ENCODE measurements at regions of chr6 and their contacts with region 1.

Region 1: GRCh38 chr6:38871741-38872568 is 156.8 kb downstream of the DNAH8 start:
- DNase-seq: no peak
- ATAC-seq: peak in 1 of 4 donors; percentile 58
- H3K4me3 ChIP-seq: no peak overlapping the region
- H3K27ac ChIP-seq: no peak overlapping the region
- H3K4me1 ChIP-seq: no peaks in the 10 kb centered on the region
- H3K27me3 ChIP-seq: peaks cover 0 to 4% (median 0%) of the 10 kb centered on the region in 3 donors
- CTCF ChIP-seq: peak; percentile 80

Region 2: GRCh38 chr6:38617856-38618255 is 254.1 kb before region 1 on chr6:
- intact Hi-C with region 1: no loop called
- DNase-seq: no peak
- ATAC-seq: no peak
- H3K4me3 ChIP-seq: no peak overlapping the region
- H3K27ac ChIP-seq: no peak overlapping the region
- H3K4me1 ChIP-seq: peaks cover 2% of the 10 kb centered on the region
- H3K27me3 ChIP-seq: no peaks in the 10 kb centered on the region
- CTCF ChIP-seq: no peak

Region 3: GRCh38 chr6:38824243-38824894 is 47.6 kb before region 1 on chr6:
- intact Hi-C with region 1: no loop called
- DNase-seq: no peak
- ATAC-seq: no peak
- H3K4me3 ChIP-seq: no peak overlapping the region
- H3K27ac ChIP-seq: no peak overlapping the region
- H3K4me1 ChIP-seq: peaks cover 11% of the 10 kb centered on the region
- H3K27me3 ChIP-seq: no peaks in the 10 kb centered on the region
- CTCF ChIP-seq: no peak

Region 4: DNA sequence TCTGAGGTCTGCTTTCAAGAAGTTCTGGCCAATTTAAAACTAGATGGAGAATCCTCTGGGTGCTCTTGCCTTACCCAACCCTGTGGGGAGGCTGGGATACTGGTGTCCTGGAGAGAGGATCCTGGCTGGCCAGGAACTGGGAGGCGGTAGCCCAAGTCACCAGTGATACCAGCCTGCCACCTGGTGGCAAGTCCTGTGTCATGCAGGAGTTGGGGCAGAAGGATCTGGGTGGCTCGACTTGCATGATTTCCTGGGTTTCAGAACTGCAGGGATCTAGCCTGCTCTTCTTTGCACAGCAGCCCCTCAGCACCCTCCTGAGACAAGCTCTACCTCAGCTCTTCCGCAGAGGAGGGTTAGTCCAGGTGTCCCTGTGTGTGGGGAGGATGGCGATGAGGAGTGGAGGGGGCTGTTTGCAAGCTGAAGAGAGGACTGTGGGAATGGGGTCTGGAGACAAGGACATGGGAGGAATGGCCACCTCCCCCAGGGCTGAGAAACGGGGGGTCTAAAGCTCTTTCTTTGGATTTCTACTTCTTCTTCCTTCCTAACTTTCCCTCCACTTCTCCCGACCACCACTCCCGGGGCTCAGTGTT is 438.1 kb after region 1 on chr6:
- intact Hi-C with region 1: loop called (anchors 2 to 5 kb)
- DNase-seq: peak; percentile 66 to 82
- ATAC-seq: peak; percentile 82 to 91 (median 84)
- H3K4me3 ChIP-seq: no peak overlapping the region
- H3K27ac ChIP-seq: no peak overlapping the region
- H3K4me1 ChIP-seq: peaks cover 12% of the 10 kb centered on the region
- H3K27me3 ChIP-seq: peaks cover 0 to 33% (median 0%) of the 10 kb centered on the region in 3 donors
- CTCF ChIP-seq: peak; percentile 89

Measured in psoas muscle (tissue), 8 donors.